ENCODE measurements at regions of chr3 and their contacts with region 1.

Region 1: GRCh38 chr3:25648107-25648535 is 16.6 kb downstream of the TOP2B start:
- DNase-seq: no peak
- ATAC-seq: peak; percentile 91

Region 2: GRCh38 chr3:25856902-25857518 is 208.9 kb after region 1 on chr3:
- intact Hi-C with region 1: loop called (anchors 10 kb)
- DNase-seq: no peak
- ATAC-seq: no peak

Measured in left ventricle myocardium superior (tissue), 1 donor.